ENCODE measurements at regions of chr1 and their contacts with region 1.

Region 1: GRCh38 chr1:232127190-232127589 is 500.6 kb downstream of the DISC1 start:
- DNase-seq: no peak
- ATAC-seq: peak; percentile 85
- H3K4me3 Mint-ChIP-seq: no peak overlapping the region
- H3K27ac Mint-ChIP-seq: no peak overlapping the region
- H3K4me1 Mint-ChIP-seq: peaks cover 18% of the 10 kb centered on the region
- H3K27me3 Mint-ChIP-seq: peaks cover 19% of the 10 kb centered on the region

Region 2: GRCh38 chr1:231971397-231972104 is 155.6 kb before region 1 on chr1:
- CTCF ChIA-PET with region 1: no interaction called
- POLR2A ChIA-PET with region 1: no interaction called
- intact Hi-C with region 1: loop called in 1 of 2 experiments (anchors 10 kb)
- DNase-seq: no peak
- ATAC-seq: no peak
- H3K4me3 Mint-ChIP-seq: no peak overlapping the region
- H3K27ac Mint-ChIP-seq: no peak overlapping the region
- H3K4me1 Mint-ChIP-seq: peaks cover 21% of the 10 kb centered on the region
- H3K27me3 Mint-ChIP-seq: no peaks in the 10 kb centered on the region

Region 3: GRCh38 chr1:232292818-232293217 is 165.6 kb after region 1 on chr1:
- CTCF ChIA-PET with region 1: no interaction called
- POLR2A ChIA-PET with region 1: no interaction called
- intact Hi-C with region 1: no loop called
- DNase-seq: no peak
- ATAC-seq: no peak
- H3K4me3 Mint-ChIP-seq: no peak overlapping the region
- H3K27ac Mint-ChIP-seq: no peak overlapping the region
- H3K4me1 Mint-ChIP-seq: no peaks in the 10 kb centered on the region
- H3K27me3 Mint-ChIP-seq: peaks cover 7% of the 10 kb centered on the region

Region 4: GRCh38 chr1:232784794-232785193 is 657.6 kb after region 1 on chr1:
- CTCF ChIA-PET with region 1: no interaction called
- POLR2A ChIA-PET with region 1: no interaction called
- intact Hi-C with region 1: loop called in 1 of 2 experiments (anchors 5 kb)
- DNase-seq: no peak
- ATAC-seq: no peak
- H3K4me3 Mint-ChIP-seq: no peak overlapping the region
- H3K27ac Mint-ChIP-seq: no peak overlapping the region
- H3K4me1 Mint-ChIP-seq: peaks cover 7% of the 10 kb centered on the region
- H3K27me3 Mint-ChIP-seq: no peaks in the 10 kb centered on the region

Measured in activated CD4-positive, alpha-beta T cell treated with anti-CD3 and anti-CD28 coated beads for 36 hours (primary cell).